Caco-2 (cell line): ENCODE measurements at regions of chr4 and their contacts with region 1.

Region 1: DNA sequence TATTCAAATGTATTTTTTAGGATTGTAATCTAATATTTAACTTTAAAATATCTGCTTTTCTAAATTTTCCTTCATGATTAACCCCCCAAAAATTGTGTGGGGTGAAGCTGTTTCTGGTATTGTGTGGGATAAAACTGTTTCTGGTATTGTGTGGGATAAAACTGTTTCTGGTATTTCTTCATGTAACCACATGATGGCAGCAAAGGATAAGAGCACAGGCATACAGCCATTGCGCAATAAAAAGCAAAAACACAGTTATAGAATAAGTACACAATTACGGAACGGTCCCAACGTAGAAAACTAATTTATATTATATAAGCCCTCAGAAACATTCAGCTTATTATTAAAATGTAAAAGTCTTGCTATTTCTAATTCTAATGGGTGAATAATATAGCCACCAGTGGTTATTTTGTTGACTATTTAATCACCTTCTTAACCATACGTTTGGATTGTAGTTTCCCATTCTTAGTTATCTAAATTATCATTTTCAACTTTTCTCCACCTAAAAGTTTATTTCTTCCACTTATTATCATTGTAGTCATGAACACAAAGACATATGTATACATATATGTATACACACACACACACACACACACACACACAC is 333.9 kb upstream of the FSTL5 start:
- DNase-seq: peak in 1 of 2 experiments; percentile 27
- H3K4me3 ChIP-seq: no peak overlapping the region
- H3K4me3 Mint-ChIP-seq: no peak overlapping the region
- H3K27ac Mint-ChIP-seq: no peak overlapping the region
- H3K4me1 ChIP-seq: no peaks in the 10 kb centered on the region
- H3K4me1 Mint-ChIP-seq: no peaks in the 10 kb centered on the region
- H3K27me3 ChIP-seq: no peaks in the 10 kb centered on the region
- H3K27me3 Mint-ChIP-seq: peaks cover 4% of the 10 kb centered on the region
- CTCF ChIP-seq: peak; percentile 67 to 80

Region 2: DNA sequence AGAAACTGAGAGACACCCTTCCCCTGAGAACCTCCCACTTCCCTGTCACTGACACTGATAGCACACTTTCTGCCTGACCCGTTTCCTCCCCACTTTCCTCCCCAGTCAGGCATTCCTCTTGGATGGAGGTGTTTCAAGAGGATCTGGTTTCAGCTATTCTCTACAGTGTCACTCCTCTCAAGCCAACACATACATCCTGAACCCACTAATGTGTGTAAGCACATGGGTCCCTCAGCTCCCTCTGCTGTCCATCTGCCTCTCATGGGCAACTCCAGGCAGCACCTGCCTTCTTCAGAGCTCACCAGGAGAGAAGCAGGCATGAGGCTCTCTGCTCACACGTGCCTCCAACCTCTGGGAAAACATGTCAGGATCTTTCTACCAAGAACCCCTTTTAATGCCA is 461.4 kb after region 1 on chr4:
- CTCF ChIA-PET with region 1: no interaction called
- POLR2A ChIA-PET with region 1: no interaction called
- intact Hi-C with region 1: loop called (anchors 1 kb)
- DNase-seq: peak; percentile 40 to 42
- H3K4me3 ChIP-seq: no peak overlapping the region
- H3K4me3 Mint-ChIP-seq: no peak overlapping the region
- H3K27ac Mint-ChIP-seq: no peak overlapping the region
- H3K4me1 ChIP-seq: no peaks in the 10 kb centered on the region
- H3K4me1 Mint-ChIP-seq: no peaks in the 10 kb centered on the region
- H3K27me3 ChIP-seq: no peaks in the 10 kb centered on the region
- H3K27me3 Mint-ChIP-seq: peaks cover 4% of the 10 kb centered on the region
- CTCF ChIP-seq: peak in 1 of 2 experiments; percentile 59

Region 3: DNA sequence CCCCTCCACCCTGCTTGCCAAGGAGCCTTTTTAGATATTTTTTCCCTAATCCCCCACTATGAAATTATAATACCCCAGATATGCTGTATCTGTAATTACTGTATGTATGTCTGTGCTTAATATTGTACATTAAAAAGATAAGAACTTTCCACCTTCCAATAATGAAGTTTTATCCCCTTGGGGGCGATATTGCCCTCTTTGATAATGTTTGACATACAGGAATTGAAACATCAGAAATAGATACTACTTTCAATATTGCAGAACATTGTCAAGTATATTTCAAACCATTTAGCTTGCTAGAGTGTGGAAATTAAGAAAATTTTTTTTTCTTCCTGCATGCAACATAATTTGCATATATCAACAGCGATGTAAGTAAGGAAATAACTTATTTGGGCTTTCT is 610.1 kb after region 1 on chr4:
- CTCF ChIA-PET with region 1: no interaction called
- POLR2A ChIA-PET with region 1: no interaction called
- intact Hi-C with region 1: loop called (anchors 5 kb)
- DNase-seq: peak in 1 of 2 experiments; percentile 5
- H3K4me3 ChIP-seq: no peak overlapping the region
- H3K4me3 Mint-ChIP-seq: no peak overlapping the region
- H3K27ac Mint-ChIP-seq: no peak overlapping the region
- H3K4me1 ChIP-seq: no peaks in the 10 kb centered on the region
- H3K4me1 Mint-ChIP-seq: no peaks in the 10 kb centered on the region
- H3K27me3 ChIP-seq: no peaks in the 10 kb centered on the region
- H3K27me3 Mint-ChIP-seq: no peaks in the 10 kb centered on the region
- CTCF ChIP-seq: no peak

Region 4: DNA sequence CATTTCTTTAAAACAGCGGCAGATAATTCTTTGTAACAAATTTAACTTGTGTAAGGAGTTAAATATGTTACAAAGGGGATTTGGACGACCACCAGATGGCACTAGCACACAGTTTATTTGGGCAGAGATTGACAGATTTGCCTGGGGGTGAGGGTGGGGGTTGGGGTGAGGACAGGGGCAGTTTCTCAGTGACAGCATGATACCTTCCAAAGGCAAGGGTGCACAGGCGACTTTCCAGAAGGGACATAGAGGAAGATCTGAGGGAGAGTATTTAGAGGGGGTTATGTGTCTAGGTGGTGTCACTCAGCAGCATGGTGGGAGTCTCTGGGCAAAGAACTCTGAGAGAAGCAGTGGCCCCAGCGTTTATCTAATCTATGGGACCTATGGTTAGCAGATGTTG is 987.2 kb after region 1 on chr4:
- CTCF ChIA-PET with region 1: no interaction called
- POLR2A ChIA-PET with region 1: no interaction called
- intact Hi-C with region 1: loop called (anchors 5 kb)
- DNase-seq: peak; percentile 59 to 60
- H3K4me3 ChIP-seq: no peak overlapping the region
- H3K4me3 Mint-ChIP-seq: no peak overlapping the region
- H3K27ac Mint-ChIP-seq: no peak overlapping the region
- H3K4me1 ChIP-seq: no peaks in the 10 kb centered on the region
- H3K4me1 Mint-ChIP-seq: no peaks in the 10 kb centered on the region
- H3K27me3 ChIP-seq: no peaks in the 10 kb centered on the region
- H3K27me3 Mint-ChIP-seq: peaks cover 4% of the 10 kb centered on the region
- CTCF ChIP-seq: peak; percentile 58 to 63